Natural killer cell (primary cell): ENCODE measurements at regions of chr14 and their contacts with region 1.

Region 1: DNA sequence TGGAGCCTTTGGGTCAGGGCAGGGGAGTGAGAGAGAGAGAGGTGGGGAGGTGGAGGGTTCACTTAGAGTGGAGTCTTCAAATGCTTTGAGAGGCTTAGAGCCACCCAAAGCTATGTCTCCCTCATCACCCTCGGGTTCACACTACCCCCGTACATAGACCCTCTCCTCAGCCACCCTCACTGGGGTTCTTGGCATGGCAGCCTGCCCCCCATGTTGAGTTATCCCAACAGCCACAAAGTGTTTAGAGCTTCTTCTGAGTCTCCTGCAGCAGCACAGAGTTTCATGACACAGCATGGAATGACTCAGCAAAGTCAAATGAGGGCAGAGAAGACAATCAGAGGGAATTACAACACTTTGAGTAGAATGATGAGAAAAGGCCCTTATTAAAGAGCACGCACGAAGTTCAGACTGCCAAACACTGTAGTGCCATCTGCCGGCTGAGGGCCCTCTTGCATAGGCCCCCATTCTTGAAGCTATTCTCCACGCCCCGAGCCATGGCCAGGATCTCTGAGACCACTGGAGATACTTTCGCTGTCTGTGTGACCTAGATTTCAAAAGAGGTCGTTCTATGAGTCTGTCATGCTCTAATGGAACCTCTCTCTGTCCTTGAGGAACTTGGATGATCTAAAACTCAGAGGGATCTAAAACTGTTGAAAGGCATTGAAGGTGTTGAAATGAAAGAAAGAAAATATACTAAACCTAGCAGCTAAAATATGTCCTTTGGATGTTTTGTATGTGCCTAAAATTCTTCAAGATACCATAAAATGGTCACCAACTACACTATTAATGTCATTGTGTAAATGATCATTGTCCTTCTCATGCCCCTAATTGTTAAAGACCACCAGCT is 221.9 kb downstream of the PELI2 start:
- DNase-seq: peak; percentile 43 to 69
- ATAC-seq: peak; percentile 85 to 94 (median 87)
- H3K4me3 ChIP-seq: no peak overlapping the region
- H3K4me3 Mint-ChIP-seq: no peak overlapping the region
- H3K27ac ChIP-seq: no peak overlapping the region
- H3K27ac Mint-ChIP-seq: no peak overlapping the region
- H3K4me1 ChIP-seq: no peaks in the 10 kb centered on the region
- H3K4me1 Mint-ChIP-seq: peaks cover 5 to 11% of the 10 kb centered on the region in 2 donors
- H3K27me3 ChIP-seq: no peaks in the 10 kb centered on the region
- H3K27me3 Mint-ChIP-seq: no peaks in the 10 kb centered on the region
- CTCF ChIP-seq: peak; percentile 70

Region 2: GRCh38 chr14:55707365-55707804 is 632.7 kb before region 1 on chr14:
- intact Hi-C with region 1: loop called (anchors 1 kb)
- DNase-seq: peak in 1 of 2 donors; percentile 40
- ATAC-seq: no peak
- H3K4me3 ChIP-seq: no peak overlapping the region
- H3K4me3 Mint-ChIP-seq: no peak overlapping the region
- H3K27ac ChIP-seq: no peak overlapping the region
- H3K27ac Mint-ChIP-seq: no peak overlapping the region
- H3K4me1 ChIP-seq: no peaks in the 10 kb centered on the region
- H3K4me1 Mint-ChIP-seq: no peaks in the 10 kb centered on the region
- H3K27me3 ChIP-seq: no peaks in the 10 kb centered on the region
- H3K27me3 Mint-ChIP-seq: no peaks in the 10 kb centered on the region
- CTCF ChIP-seq: peak; percentile 38

Region 3: DNA sequence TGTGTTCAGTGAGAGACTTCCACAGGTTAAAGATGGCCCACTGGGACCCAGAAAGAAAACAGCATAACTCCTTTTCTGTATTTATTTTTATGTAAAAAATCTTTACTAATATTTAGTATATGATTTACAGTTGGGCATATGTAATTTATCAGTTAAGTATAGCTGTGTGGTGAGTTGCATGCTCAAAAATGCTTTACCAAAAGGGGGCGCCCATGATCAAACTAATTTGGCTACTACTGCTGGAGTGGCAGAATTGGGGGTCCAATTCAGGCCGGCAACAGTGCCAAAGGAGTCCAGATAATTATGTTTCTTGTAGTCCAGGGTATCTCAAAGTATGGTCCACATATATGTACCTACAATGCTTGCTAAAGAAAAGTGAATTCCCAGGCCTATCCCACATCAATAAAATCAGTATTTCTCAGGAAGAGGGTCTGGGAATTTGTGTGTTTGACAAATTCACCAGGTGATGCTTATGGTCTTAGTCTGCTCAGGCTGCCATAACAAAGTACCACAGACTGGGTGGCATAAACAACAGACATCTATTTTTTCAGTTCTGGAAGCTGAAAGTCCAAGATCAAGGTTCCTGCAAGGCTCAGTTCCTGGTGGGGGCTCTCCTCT is 608.1 kb before region 1 on chr14:
- intact Hi-C with region 1: loop called (anchors 1 kb)
- DNase-seq: peak; percentile 34 to 69
- ATAC-seq: peak in 1 of 3 donors; percentile 61
- H3K4me3 ChIP-seq: no peak overlapping the region
- H3K4me3 Mint-ChIP-seq: no peak overlapping the region
- H3K27ac ChIP-seq: no peak overlapping the region
- H3K27ac Mint-ChIP-seq: no peak overlapping the region
- H3K4me1 ChIP-seq: no peaks in the 10 kb centered on the region
- H3K4me1 Mint-ChIP-seq: peaks cover 6 to 29% of the 10 kb centered on the region in 2 donors
- H3K27me3 ChIP-seq: no peaks in the 10 kb centered on the region
- H3K27me3 Mint-ChIP-seq: no peaks in the 10 kb centered on the region
- CTCF ChIP-seq: peak; percentile 86

Region 4: GRCh38 chr14:56324856-56325699 is 15.0 kb before region 1 on chr14:
- intact Hi-C with region 1: no loop called
- DNase-seq: no peak
- ATAC-seq: no peak
- H3K4me3 ChIP-seq: no peak overlapping the region
- H3K4me3 Mint-ChIP-seq: no peak overlapping the region
- H3K27ac ChIP-seq: no peak overlapping the region
- H3K27ac Mint-ChIP-seq: no peak overlapping the region
- H3K4me1 ChIP-seq: no peaks in the 10 kb centered on the region
- H3K4me1 Mint-ChIP-seq: no peaks in the 10 kb centered on the region
- H3K27me3 ChIP-seq: no peaks in the 10 kb centered on the region
- H3K27me3 Mint-ChIP-seq: no peaks in the 10 kb centered on the region
- CTCF ChIP-seq: no peak